ENCODE measurements at regions of chr2 and their contacts with region 1.

Region 1: GRCh38 chr2:211035548-211036185 is 479.3 kb downstream of the CPS1 start:
- DNase-seq: no peak
- H3K4me3 ChIP-seq: no peak overlapping the region
- H3K27ac ChIP-seq: no peak overlapping the region
- H3K4me1 ChIP-seq: no peaks in the 10 kb centered on the region
- H3K27me3 ChIP-seq: no peaks in the 10 kb centered on the region
- CTCF ChIP-seq: peak; percentile 23 to 47 (median 32)

Region 2: DNA sequence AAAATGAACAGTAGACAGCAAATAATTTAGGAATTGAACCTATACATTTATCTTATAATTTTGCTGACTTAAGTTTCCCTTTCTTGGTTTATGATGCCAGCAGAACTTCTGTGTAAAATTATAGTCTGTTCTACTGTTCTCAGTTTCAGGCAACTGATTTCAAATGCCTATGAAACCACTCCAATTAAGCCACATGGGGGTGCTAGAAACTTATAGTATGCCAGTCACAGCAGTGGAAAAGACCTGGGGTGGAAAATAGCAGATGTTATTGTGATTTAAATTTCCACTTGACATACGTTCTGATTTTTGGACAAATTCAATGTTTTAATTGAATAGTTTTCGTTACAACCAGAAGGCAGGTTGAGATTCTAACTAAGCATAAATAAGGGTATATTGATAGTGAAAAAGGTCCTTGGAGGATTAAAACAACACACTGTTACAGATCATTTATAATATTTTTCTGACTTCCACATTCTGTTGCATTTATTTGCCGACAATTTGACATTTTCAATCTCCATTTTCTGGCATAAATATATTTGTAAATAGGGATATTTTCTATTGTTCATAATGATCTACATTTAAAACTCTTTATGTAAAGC is 417.8 kb before region 1 on chr2:
- intact Hi-C with region 1: loop called (anchors 5 kb)
- DNase-seq: no peak
- H3K4me3 ChIP-seq: no peak overlapping the region
- H3K27ac ChIP-seq: no peak overlapping the region
- H3K4me1 ChIP-seq: no peaks in the 10 kb centered on the region
- H3K27me3 ChIP-seq: no peaks in the 10 kb centered on the region
- CTCF ChIP-seq: peak; percentile 5 to 69 (median 38)

Region 3: GRCh38 chr2:211055438-211055837 is 19.8 kb after region 1 on chr2:
- intact Hi-C with region 1: no loop called
- DNase-seq: no peak
- H3K4me3 ChIP-seq: no peak overlapping the region
- H3K27ac ChIP-seq: no peak overlapping the region
- H3K4me1 ChIP-seq: no peaks in the 10 kb centered on the region
- H3K27me3 ChIP-seq: no peaks in the 10 kb centered on the region
- CTCF ChIP-seq: no peak

Region 4: GRCh38 chr2:211328126-211328525 is 292.5 kb after region 1 on chr2:
- intact Hi-C with region 1: no loop called
- DNase-seq: no peak
- H3K4me3 ChIP-seq: no peak overlapping the region
- H3K27ac ChIP-seq: no peak overlapping the region
- H3K4me1 ChIP-seq: no peaks in the 10 kb centered on the region
- H3K27me3 ChIP-seq: no peaks in the 10 kb centered on the region
- CTCF ChIP-seq: no peak